HepG2 (cell line): ENCODE measurements at regions of chr16 and their contacts with region 1.

Region 1: DNA sequence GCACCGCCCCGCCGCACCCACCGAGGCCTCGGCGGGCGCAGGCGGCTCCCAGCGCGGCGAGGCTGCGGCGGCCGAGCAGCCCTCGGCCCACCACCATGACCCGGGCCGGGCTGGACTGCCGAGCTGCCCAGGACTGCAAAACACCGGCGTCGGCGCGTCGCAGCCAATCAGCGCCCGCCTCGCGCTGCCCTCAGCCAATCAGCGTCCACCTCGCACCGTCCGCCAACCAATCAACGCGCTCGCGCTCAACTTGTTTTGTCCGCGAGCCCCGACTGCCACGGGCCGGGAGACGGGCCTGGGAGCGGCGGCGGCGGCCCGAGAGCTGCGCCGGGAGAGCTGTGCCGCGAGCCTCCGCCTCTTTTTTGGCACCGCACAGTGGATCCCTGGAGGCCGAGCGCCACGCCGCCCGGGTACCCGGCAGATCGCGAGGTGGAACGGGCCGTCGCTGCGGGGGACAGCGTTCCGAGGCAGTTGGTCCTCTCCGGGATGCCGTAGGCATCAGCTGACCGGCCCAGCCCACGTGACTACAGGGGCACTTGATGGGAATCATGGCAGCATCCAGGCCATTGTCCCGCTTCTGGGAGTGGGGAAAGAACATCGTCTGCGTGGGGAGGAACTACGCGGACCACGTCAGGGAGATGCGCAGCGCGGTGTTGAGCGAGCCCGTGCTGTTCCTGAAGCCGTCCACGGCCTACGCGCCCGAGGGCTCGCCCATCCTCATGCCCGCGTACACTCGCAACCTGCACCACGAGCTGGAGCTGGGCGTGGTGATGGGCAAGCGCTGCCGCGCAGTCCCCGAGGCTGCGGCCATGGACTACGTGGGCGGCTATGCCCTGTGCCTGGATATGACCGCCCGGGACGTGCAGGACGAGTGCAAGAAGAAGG is at the starts of genes FAHD1 and HAGH:
- DNase-seq: peak; percentile 88
- ATAC-seq: peak; percentile 77
- H3K4me3 ChIP-seq: peak within 1 kb of the TSS; percentile 72 to 97 (median 92)
- H3K27ac ChIP-seq: peak within 1 kb of the TSS; percentile 93
- H3K4me1 ChIP-seq: peaks cover 54% of the 10 kb centered on the region
- H3K27me3 ChIP-seq: no peaks in the 10 kb centered on the region; a peak in 1 of 5 replicates
- CTCF ChIP-seq: 0 out of 2 replicates have a peak, but pooled peaks have one; percentile 3
- EP300 ChIP-seq: peak; percentile 35 to 36; a peak in 2 of 4 replicates
- POLR2A ChIP-seq: peak; percentile 84 to 90
- RAD21 ChIP-seq: no peak; the same call in none of the 2 replicates
- total RNA-seq, gene FAHD1: 45.3 and 55.1 TPM in 2 replicates
- total RNA-seq, gene HAGH: 55.6 and 70.4 TPM in 2 replicates

Region 2: GRCh38 chr16:1772736-1773584 is 54.0 kb before region 1 on chr16 and contains the starts of genes EME2 and MRPS34:
- CTCF ChIA-PET with region 1: interaction called, 9 read pairs
- POLR2A ChIA-PET with region 1: interaction called, 10 read pairs
- in situ Hi-C with region 1: no loop called
- intact Hi-C with region 1: no loop called
- DNase-seq: peak; percentile 78
- ATAC-seq: peak; percentile 70
- H3K4me3 ChIP-seq: peak within 1 kb of the TSS; percentile 94 to 96 (median 95)
- H3K27ac ChIP-seq: peak within 1 kb of the TSS; percentile 90
- H3K4me1 ChIP-seq: peaks cover 12% of the 10 kb centered on the region
- H3K27me3 ChIP-seq: no peaks in the 10 kb centered on the region; a peak in 2 of 5 replicates
- CTCF ChIP-seq: peak; percentile 91
- EP300 ChIP-seq: peak in 1 of 2 experiments; percentile 21; a peak in 1 of 4 replicates
- POLR2A ChIP-seq: peak; percentile 73 to 86
- RAD21 ChIP-seq: peak; percentile 87
- total RNA-seq, gene EME2: 1.7 and 7.6 TPM in 2 replicates
- total RNA-seq, gene MRPS34: 129 and 131 TPM in 2 replicates

Region 3: DNA sequence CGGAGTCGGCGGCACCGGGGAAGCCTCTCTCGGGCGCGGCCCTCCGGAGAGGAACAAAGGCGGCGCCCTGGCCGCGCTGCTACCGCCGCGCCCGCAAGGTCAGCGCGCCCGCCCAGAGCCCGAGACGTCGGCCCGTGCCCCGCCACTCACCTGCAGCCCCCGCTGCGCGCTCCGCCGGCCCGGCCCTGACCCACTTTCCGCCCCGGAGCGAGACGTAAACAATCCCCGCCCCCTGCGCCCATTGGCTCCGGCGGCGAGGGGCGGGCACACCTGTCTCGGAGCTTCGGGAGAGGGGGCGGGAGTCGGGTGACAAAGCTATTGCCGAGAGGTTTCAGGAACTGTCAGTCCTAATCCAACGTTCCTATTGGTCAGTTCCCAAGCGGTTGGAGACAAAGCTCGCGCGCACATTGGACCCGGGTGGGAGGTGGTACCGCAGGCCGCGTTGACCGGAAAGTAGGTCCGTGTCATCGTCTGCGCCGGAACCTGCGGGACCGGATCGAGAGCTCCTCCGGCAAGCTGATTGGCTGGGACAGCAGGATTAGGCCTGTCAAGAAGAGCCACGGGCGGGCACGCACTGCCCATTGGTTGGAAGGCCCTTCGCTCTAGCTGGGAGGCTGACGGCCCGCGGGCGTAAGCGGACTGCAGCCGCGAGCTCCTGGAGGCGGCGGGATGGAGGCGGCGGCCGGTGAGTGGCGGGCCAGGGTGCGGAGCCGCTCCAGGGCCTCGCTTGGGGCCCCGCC is 44.4 kb before region 1 on chr16 and contains the starts of genes NUBP2 and SPSB3:
- CTCF ChIA-PET with region 1: no interaction called
- POLR2A ChIA-PET with region 1: interaction called, 43 read pairs
- in situ Hi-C with region 1: loop called (anchors 5 kb)
- intact Hi-C with region 1: loop called (anchors 5 kb)
- DNase-seq: peak; percentile 99
- ATAC-seq: peak; percentile 90
- H3K4me3 ChIP-seq: peak within 1 kb of the TSS; percentile 94 to 96 (median 94)
- H3K27ac ChIP-seq: peak within 1 kb of the TSS; percentile 70
- H3K4me1 ChIP-seq: peaks cover 22% of the 10 kb centered on the region
- H3K27me3 ChIP-seq: peaks cover 0 to 2% of the 10 kb centered on the region in 2 experiments; a peak in 1 of 5 replicates
- CTCF ChIP-seq: no peak
- EP300 ChIP-seq: no peak
- POLR2A ChIP-seq: peak; percentile 41 to 74; a peak in 3 of 4 replicates
- RAD21 ChIP-seq: no peak; the same call in 1 of the 2 replicates
- total RNA-seq, gene NUBP2: 43.8 and 61.5 TPM in 2 replicates
- total RNA-seq, gene SPSB3: 8.2 and 13.2 TPM in 2 replicates

Region 4: GRCh38 chr16:1923299-1924034 is 96.5 kb after region 1 on chr16:
- CTCF ChIA-PET with region 1: no interaction called
- POLR2A ChIA-PET with region 1: no interaction called
- in situ Hi-C with region 1: no loop called
- intact Hi-C with region 1: no loop called
- DNase-seq: peak; percentile 50
- ATAC-seq: peak; percentile 52
- H3K4me3 ChIP-seq: peak overlapping the region in 1 of 3 experiments; percentile 38; a peak in 1 of 6 replicates
- H3K27ac ChIP-seq: no peak overlapping the region
- H3K4me1 ChIP-seq: peaks cover 48% of the 10 kb centered on the region
- H3K27me3 ChIP-seq: peaks cover 19 to 53% of the 10 kb centered on the region in 2 experiments
- CTCF ChIP-seq: peak; percentile 67
- EP300 ChIP-seq: peak in 1 of 2 experiments; percentile 49; a peak in 1 of 4 replicates
- POLR2A ChIP-seq: no peak
- RAD21 ChIP-seq: peak; percentile 15; the same call in 1 of the 2 replicates